Activated T-helper 2 cell treated with anti-CD3 and anti-CD28 coated beads, Interferon-gamma antibody, Interleukin-2, Interleukin-4, amounts not matched to agents 10 μg/mL and 5 μg/mL and 100 μg/mL, durations not matched to agents 14 hours and 24 hours and 36 hours (primary cell): ENCODE measurements at regions of chrX and their contacts with region 1.

Region 1: DNA sequence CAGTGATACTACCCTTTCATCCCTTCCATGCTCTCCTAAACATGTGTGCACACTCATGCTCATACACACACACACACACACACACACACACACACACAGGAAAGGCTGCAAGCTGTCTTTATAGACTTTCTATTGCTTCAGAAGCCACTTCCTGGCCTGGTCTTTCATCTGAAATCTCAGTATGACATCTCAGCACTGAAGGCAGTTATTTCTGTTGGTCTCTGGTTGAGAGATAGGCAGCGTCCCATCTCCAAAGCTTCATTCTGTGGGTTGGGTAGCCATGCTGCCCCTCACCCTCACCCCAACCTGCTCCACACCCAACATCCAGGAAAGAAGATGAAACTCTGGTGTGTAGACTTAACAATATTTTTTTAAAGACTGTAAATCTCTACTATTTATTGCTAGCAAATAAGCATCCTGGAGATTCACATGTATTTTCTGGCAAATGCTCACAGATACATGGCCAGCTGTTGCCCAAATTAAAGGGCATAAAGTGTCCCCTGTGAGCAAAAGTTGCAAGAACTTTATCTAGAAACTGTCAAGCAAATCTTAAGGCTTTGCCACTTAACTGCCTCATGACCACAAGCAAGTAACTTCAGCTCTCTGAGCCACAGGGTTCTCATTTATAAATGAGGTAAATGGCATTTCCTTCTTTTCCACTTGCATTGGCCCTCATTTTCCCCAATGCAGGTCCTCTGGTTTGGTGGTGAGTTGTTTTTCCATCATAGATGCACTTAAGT is 189.8 kb upstream of the AFF2 start:
- DNase-seq: peak; percentile 55
- H3K4me3 Mint-ChIP-seq: no peak overlapping the region
- H3K27ac Mint-ChIP-seq: peak overlapping the region; percentile 83
- H3K4me1 Mint-ChIP-seq: peaks cover 31% of the 10 kb centered on the region
- H3K27me3 Mint-ChIP-seq: no peaks in the 10 kb centered on the region

Region 2: GRCh38 chrX:148270499-148270898 is 40.1 kb before region 1 on chrX:
- intact Hi-C with region 1: loop called (anchors 5 kb)
- DNase-seq: no peak
- H3K4me3 Mint-ChIP-seq: no peak overlapping the region
- H3K27ac Mint-ChIP-seq: no peak overlapping the region
- H3K4me1 Mint-ChIP-seq: peaks cover 21% of the 10 kb centered on the region
- H3K27me3 Mint-ChIP-seq: no peaks in the 10 kb centered on the region

Region 3: DNA sequence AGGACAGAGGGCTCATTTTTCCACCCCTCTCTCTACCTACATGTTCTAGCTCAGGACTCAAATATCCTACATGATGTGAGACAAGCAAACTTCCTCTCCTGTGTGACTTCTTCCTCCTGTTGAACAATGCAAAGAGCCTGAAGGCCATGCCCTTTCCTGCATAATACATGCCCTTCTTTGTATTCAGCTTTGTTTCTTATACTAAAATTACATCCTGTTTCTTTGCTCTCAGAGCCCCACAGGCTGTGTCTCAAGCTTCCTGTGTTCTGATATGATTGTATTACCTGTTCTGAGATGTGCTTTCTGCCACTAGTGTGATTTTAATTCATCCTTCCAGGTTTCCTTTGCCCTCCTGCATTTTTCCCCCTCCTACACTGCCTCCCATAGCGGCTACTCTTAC is 23.4 kb after region 1 on chrX:
- intact Hi-C with region 1: no loop called
- DNase-seq: peak; percentile 9
- H3K4me3 Mint-ChIP-seq: no peak overlapping the region
- H3K27ac Mint-ChIP-seq: peak overlapping the region; percentile 60
- H3K4me1 Mint-ChIP-seq: peaks cover 22% of the 10 kb centered on the region
- H3K27me3 Mint-ChIP-seq: no peaks in the 10 kb centered on the region

Region 4: DNA sequence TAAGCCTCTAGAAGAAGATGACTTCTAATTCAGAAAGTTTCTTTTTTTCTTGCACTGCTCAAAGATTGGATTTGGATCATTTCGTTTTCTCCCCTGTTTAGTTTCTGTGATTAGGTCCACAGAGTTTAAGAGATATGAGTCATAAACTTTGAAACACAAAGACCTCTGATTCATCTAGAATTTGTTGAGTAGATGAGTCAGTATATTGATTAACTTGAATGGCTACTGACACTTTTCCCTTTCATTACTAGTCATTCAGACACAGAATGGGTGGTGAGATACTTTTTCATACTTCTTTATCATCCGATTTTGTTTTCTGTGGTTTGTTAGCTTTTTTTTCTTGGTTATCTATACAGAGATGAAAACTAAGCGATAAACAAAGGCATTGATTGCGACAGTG is 155.7 kb after region 1 on chrX:
- intact Hi-C with region 1: loop called (anchors 2 kb)
- DNase-seq: no peak
- H3K4me3 Mint-ChIP-seq: no peak overlapping the region
- H3K27ac Mint-ChIP-seq: no peak overlapping the region
- H3K4me1 Mint-ChIP-seq: peaks cover 8% of the 10 kb centered on the region
- H3K27me3 Mint-ChIP-seq: peaks cover 13% of the 10 kb centered on the region